ENCODE measurements at regions of chr7 and their contacts with region 1.

Region 1: DNA sequence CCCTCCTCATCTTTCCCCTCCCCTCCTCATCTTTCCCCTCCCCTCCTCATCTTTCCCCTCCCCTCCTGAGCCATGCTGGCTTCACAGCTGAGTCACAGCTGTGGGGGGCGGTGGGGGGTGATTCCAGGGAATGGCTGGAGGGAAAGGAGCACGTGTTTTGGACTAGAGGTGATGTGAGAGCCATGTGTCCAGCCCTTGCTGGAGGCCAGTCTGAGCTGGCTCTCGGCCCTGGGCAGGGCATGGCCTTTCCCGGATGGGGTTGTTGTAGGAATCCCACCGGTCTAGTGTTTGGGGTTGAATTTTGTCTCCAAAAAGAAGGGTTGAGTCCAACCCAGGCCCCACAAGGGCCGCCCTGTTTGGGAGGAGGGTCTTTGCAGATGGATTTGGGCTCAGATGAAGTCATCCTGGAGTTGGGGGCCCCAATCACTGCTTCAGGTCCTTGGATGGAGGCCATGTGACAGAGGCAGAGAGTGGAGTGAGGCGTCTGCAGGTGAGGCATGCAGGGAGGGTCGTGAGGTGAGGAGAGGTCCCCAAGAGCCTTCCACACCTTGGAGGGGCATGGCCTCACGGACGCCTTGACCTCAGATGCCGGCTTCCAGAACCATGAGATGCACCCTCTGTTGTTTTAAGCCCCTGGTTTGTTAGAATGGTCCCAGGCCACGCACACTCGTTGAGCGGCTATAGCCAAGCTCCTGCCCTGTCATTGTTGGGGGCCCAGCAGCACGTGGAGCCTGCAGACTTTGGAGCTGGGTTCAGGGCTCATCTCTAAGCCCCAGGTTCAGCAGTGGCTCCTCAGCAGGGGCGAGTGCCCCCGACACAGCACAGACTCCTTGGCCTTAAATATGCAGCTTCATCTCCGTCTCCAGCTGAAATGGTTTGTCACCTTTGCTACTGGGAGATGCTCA is 101.6 kb downstream of the DNAJB6 start:
- DNase-seq: no peak
- ATAC-seq: no peak
- H3K4me3 ChIP-seq: no peak overlapping the region
- H3K27ac ChIP-seq: no peak overlapping the region
- H3K4me1 ChIP-seq: no peaks in the 10 kb centered on the region
- H3K27me3 ChIP-seq: no peaks in the 10 kb centered on the region
- CTCF ChIP-seq: no peak
- POLR2A ChIP-seq: no peak
- RAD21 ChIP-seq: no peak

Region 2: GRCh38 chr7:157357129-157358040 is 81.0 kb before region 1 on chr7:
- CTCF ChIA-PET with region 1: no interaction called
- POLR2A ChIA-PET with region 1: no interaction called
- dilution Hi-C with region 1: no loop called
- in situ Hi-C with region 1: no loop called
- intact Hi-C with region 1: no loop called
- DNase-seq: no peak
- ATAC-seq: no peak
- H3K4me3 ChIP-seq: no peak overlapping the region
- H3K27ac ChIP-seq: no peak overlapping the region
- H3K4me1 ChIP-seq: peaks cover 19% of the 10 kb centered on the region
- H3K27me3 ChIP-seq: no peaks in the 10 kb centered on the region
- CTCF ChIP-seq: no peak
- POLR2A ChIP-seq: no peak
- RAD21 ChIP-seq: no peak

Region 3: GRCh38 chr7:158183431-158183830 is 745.1 kb after region 1 on chr7:
- CTCF ChIA-PET with region 1: no interaction called
- POLR2A ChIA-PET with region 1: no interaction called
- dilution Hi-C with region 1: no loop called
- in situ Hi-C with region 1: no loop called
- intact Hi-C with region 1: loop called (anchors 5 kb)
- DNase-seq: no peak
- ATAC-seq: no peak
- H3K4me3 ChIP-seq: no peak overlapping the region
- H3K27ac ChIP-seq: no peak overlapping the region
- H3K4me1 ChIP-seq: no peaks in the 10 kb centered on the region
- H3K27me3 ChIP-seq: no peaks in the 10 kb centered on the region
- CTCF ChIP-seq: no peak
- POLR2A ChIP-seq: no peak
- RAD21 ChIP-seq: no peak